Gastrocnemius medialis (tissue), 4 donors: ENCODE measurements at regions of chr1 and their contacts with region 1.

Region 1: GRCh38 chr1:52002038-52002917 is 11.8 kb upstream of the RAB3B start:
- DNase-seq: peak; percentile 13 to 35
- ATAC-seq: peak; percentile 96 to 99
- H3K4me3 ChIP-seq: no peak overlapping the region
- H3K27ac ChIP-seq: no peak overlapping the region
- H3K4me1 ChIP-seq: no peaks in the 10 kb centered on the region
- H3K27me3 ChIP-seq: peaks cover 0 to 12% (median 0%) of the 10 kb centered on the region in 3 donors
- CTCF ChIP-seq: peak; percentile 76 to 89 (median 85)
- POLR2A ChIP-seq: no peak

Region 2: GRCh38 chr1:51433269-51433971 is 568.9 kb before region 1 on chr1:
- in situ Hi-C with region 1: no loop called
- intact Hi-C with region 1: no loop called
- DNase-seq: no peak
- ATAC-seq: peak; percentile 26 to 30
- H3K4me3 ChIP-seq: no peak overlapping the region
- H3K27ac ChIP-seq: peak overlapping the region in 3 of 4 donors; percentile 15 to 46 (median 37)
- H3K4me1 ChIP-seq: peaks cover 0 to 13% of the 10 kb centered on the region in 2 donors
- H3K27me3 ChIP-seq: no peaks in the 10 kb centered on the region
- CTCF ChIP-seq: no peak
- POLR2A ChIP-seq: no peak

Region 3: GRCh38 chr1:51897699-51898031 is 104.6 kb before region 1 on chr1:
- in situ Hi-C with region 1: loop called in 3 of 4 experiments (anchors 5 to 10 kb)
- intact Hi-C with region 1: loop called (anchors 1 kb)
- DNase-seq: no peak
- ATAC-seq: no peak
- H3K4me3 ChIP-seq: no peak overlapping the region
- H3K27ac ChIP-seq: no peak overlapping the region
- H3K4me1 ChIP-seq: no peaks in the 10 kb centered on the region
- H3K27me3 ChIP-seq: peaks cover 7 to 26% (median 7%) of the 10 kb centered on the region in 3 donors
- CTCF ChIP-seq: no peak
- POLR2A ChIP-seq: no peak

Region 4: DNA sequence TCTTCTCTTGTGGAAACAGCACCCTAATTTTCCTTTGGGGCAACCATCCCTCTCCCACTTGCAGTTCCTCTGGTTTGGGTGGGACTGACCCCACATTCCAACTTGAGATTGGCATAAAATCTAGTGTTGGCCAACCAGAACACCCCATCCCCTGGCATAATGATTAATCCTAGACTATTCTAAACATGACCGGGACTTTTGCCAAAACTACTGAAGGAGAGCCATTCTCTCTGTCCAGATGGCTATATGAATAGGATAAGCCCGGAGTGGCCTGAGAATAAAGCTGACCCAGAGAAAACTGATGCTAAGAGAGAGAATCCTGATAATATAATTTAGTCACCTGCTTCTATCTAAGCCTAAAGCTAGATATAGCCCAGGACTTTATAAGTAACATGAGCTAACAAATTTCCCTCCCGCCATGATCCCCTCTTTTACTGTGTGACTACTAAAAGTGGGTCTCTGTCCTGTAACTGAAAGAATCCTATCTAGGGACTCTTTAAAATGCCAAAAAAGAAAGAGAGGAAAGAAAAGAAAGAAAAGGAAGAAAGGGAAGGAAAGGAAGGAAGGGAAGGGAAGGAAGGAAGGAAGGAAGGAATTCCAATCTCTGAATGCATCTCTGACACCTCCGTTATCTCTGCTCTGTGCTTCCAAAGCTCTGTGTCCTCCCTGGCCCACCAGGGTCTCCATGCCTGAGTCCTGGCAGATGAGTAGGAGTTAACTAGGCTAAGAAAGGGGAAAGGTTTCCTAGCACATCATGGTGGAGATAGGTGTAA is 95.8 kb before region 1 on chr1:
- in situ Hi-C with region 1: loop called in 2 of 4 experiments (anchors 5 to 10 kb)
- intact Hi-C with region 1: no loop called
- DNase-seq: no peak
- ATAC-seq: no peak
- H3K4me3 ChIP-seq: no peak overlapping the region
- H3K27ac ChIP-seq: no peak overlapping the region
- H3K4me1 ChIP-seq: no peaks in the 10 kb centered on the region
- H3K27me3 ChIP-seq: peaks cover 5 to 34% (median 25%) of the 10 kb centered on the region in 3 donors
- CTCF ChIP-seq: no peak
- POLR2A ChIP-seq: no peak